ENCODE measurements at regions of chr19 and their contacts with region 1.

Region 1: GRCh38 chr19:38929929-38930775 is at the start of gene SARS2:
- DNase-seq: peak; percentile 93
- H3K4me3 ChIP-seq: peak within 1 kb of the TSS; percentile 76
- H3K27ac ChIP-seq: peak within 1 kb of the TSS; percentile 88
- H3K4me1 ChIP-seq: peaks cover 12% of the 10 kb centered on the region
- H3K27me3 ChIP-seq: no peaks in the 10 kb centered on the region
- CTCF ChIP-seq: peak; percentile 100
- total RNA-seq, gene SARS2: 27.2 to 37.2 TPM

Region 2: DNA sequence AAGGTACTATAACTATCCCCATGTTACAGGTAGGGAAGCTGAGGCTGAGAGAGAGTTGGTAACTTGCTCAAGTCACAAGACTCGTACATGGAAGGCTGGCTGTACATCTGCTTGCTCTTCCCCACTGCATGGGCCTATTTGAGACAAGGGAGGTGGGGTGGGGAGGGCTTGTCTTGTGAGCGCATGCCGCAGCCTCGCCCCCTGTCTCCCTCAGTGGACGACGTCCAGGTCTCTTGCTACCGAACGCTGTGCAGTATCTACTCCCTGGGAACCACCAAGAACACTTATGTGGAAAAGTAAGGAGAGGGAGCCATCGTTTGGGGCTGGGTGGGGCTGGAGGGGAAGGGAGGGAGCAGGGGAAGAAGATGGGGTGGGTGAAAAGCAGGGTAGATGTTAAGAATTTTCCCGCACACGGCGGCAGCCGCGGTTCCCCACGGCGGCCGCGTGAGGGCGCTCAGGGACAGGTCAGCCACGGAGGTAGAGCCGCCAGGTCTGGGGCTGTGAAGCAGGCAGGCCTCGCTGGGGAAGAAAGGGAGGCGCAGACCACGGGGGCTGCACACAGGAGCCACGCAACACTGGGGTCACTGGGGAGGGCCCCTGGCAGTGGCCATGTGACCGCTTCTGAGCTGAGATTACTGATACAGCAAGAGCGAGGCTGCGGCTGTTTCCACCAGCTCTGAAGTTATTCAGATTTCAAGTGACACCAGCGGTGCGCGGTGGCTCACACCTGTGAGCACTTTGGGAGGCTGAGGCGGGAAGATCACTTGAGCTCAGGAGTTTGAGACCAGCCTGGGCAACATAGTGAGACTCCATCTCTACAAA is 415.1 kb before region 1 on chr19:
- intact Hi-C with region 1: loop called (anchors 10 kb)
- DNase-seq: peak; percentile 60
- H3K4me3 ChIP-seq: no peak overlapping the region
- H3K27ac ChIP-seq: no peak overlapping the region
- H3K4me1 ChIP-seq: no peaks in the 10 kb centered on the region
- H3K27me3 ChIP-seq: no peaks in the 10 kb centered on the region
- CTCF ChIP-seq: peak; percentile 88

Region 3: GRCh38 chr19:38544034-38544958 is 385.9 kb before region 1 on chr19:
- intact Hi-C with region 1: loop called (anchors 10 kb)
- DNase-seq: peak; percentile 40
- H3K4me3 ChIP-seq: no peak overlapping the region
- H3K27ac ChIP-seq: no peak overlapping the region
- H3K4me1 ChIP-seq: no peaks in the 10 kb centered on the region
- H3K27me3 ChIP-seq: no peaks in the 10 kb centered on the region
- CTCF ChIP-seq: peak; percentile 54

Region 4: DNA sequence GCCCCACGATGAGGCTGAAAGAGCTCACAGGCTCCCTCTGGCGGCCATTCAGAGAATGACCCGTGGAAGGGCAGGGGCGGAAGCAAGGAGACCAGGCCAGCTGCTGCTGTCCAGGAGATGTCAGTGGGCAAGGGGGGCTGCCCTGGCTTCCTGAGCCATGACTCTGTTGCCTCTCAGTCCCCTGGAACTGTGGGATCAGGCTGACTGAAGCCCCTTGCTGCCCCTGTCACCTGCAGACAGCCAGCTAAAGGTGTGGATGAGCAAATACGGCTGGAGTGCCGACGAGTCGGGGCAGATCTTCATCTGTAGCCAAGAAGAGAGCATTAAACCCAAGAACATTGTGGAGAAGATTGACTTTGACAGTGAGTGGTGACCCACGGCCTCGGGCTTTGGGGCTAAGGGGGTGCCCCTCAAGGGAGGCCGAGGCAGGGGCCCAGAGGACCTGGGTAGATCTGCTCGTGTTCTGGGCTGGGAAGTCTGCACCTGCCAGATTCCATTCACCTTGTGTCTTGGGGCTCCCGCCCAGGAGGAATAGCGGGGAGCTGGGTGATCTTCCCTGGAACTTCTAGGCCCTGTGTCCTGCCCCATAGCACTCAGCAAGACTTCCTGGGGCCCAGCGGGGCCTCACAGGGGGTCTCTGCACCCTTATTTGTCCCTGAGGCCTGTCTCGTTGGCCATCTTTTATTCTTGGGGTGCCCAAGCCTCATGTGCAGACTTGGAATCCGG is 295.2 kb before region 1 on chr19:
- intact Hi-C with region 1: loop called (anchors 10 kb)
- DNase-seq: peak; percentile 83
- H3K4me3 ChIP-seq: no peak overlapping the region
- H3K27ac ChIP-seq: peak overlapping the region; percentile 79
- H3K4me1 ChIP-seq: peaks cover 6% of the 10 kb centered on the region
- H3K27me3 ChIP-seq: no peaks in the 10 kb centered on the region
- CTCF ChIP-seq: peak; percentile 98

Measured in colonic mucosa (tissue), 4 donors.